Activated naive CD4-positive, alpha-beta T cell treated with anti-CD3 and anti-CD28 coated beads for 36 hours (primary cell): ENCODE measurements at regions of chr6 and their contacts with region 1.

Region 1: GRCh38 chr6:154247119-154247861 is 109.3 kb downstream of the IPCEF1 start:
- DNase-seq: peak; percentile 69
- H3K4me3 Mint-ChIP-seq: peak overlapping the region; percentile 87
- H3K27ac Mint-ChIP-seq: peak overlapping the region; percentile 98
- H3K4me1 Mint-ChIP-seq: peaks cover 68% of the 10 kb centered on the region
- H3K27me3 Mint-ChIP-seq: no peaks in the 10 kb centered on the region

Region 2: DNA sequence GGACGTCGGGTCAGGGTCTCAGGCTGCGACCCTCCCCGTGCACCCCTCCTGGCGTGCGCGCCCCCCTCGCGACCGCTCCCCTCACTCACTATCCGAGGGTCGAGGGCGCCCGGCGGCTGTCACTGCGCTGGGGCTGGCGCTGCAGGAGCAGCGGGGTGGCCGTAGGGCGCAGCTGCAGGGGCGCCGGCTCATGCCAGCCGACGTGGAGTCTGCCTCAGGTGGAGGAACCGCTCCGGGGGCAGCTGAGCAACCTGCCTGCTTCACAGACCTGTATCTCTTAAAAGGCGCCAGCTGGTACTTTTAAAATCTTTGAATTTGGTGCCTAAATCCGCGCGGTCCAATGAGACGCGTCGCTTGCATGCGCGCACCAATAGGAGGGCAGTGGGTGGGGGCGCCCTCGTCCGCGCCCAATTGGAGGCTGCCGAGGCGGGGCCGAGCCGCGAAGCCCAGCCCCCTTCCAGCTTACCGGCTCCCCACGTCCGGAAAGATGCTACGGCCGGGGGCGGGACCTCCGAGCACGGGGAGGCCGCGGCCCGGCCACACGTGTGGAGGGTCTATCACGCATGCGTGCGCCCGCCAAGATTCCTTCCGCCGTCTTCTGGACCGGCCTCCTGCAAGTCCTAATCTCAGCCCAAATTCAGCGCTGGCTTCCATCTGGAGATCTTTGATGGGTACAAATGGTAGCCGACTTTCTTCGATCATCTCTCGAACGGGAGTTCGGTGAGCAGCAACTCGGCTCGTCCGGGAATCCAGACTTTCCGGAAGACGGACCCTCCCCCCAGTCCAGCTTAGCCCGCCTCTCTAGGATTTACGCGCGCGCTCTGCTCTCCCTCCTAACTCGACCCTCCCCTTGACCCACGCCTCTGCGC is 1264.3 kb before region 1 on chr6 and contains the start of gene FBXO5:
- CTCF ChIA-PET with region 1: no interaction called
- intact Hi-C with region 1: loop called (anchors 5 kb)
- DNase-seq: peak; percentile 97
- H3K4me3 Mint-ChIP-seq: peak within 1 kb of the TSS; percentile 99
- H3K27ac Mint-ChIP-seq: peak within 1 kb of the TSS; percentile 100
- H3K4me1 Mint-ChIP-seq: peaks cover 44% of the 10 kb centered on the region
- H3K27me3 Mint-ChIP-seq: no peaks in the 10 kb centered on the region
- total RNA-seq, gene FBXO5: 61.4 to 62.3 TPM

Region 3: GRCh38 chr6:154197196-154197860 is 50.0 kb before region 1 on chr6:
- CTCF ChIA-PET with region 1: interaction called, 3 read pairs
- intact Hi-C with region 1: loop called (anchors 2 kb)
- DNase-seq: no peak
- H3K4me3 Mint-ChIP-seq: peak overlapping the region; percentile 28
- H3K27ac Mint-ChIP-seq: no peak overlapping the region
- H3K4me1 Mint-ChIP-seq: peaks cover 60% of the 10 kb centered on the region
- H3K27me3 Mint-ChIP-seq: no peaks in the 10 kb centered on the region

Region 4: GRCh38 chr6:154267508-154268106 is 20.3 kb after region 1 on chr6:
- CTCF ChIA-PET with region 1: interaction called, 4 read pairs
- intact Hi-C with region 1: loop called (anchors 1 kb)
- DNase-seq: peak; percentile 32
- H3K4me3 Mint-ChIP-seq: no peak overlapping the region
- H3K27ac Mint-ChIP-seq: no peak overlapping the region
- H3K4me1 Mint-ChIP-seq: peaks cover 25% of the 10 kb centered on the region
- H3K27me3 Mint-ChIP-seq: no peaks in the 10 kb centered on the region

Region 5: GRCh38 chr6:154606457-154606856 is 359.2 kb after region 1 on chr6:
- CTCF ChIA-PET with region 1: no interaction called
- intact Hi-C with region 1: loop called (anchors 5 kb)
- DNase-seq: peak; percentile 97
- H3K4me3 Mint-ChIP-seq: peak overlapping the region; percentile 2
- H3K27ac Mint-ChIP-seq: peak overlapping the region; percentile 79
- H3K4me1 Mint-ChIP-seq: peaks cover 40% of the 10 kb centered on the region
- H3K27me3 Mint-ChIP-seq: peaks cover 2% of the 10 kb centered on the region